HAP-1 (cell line): ENCODE measurements at regions of chr5 and their contacts with region 1.

Region 1: DNA sequence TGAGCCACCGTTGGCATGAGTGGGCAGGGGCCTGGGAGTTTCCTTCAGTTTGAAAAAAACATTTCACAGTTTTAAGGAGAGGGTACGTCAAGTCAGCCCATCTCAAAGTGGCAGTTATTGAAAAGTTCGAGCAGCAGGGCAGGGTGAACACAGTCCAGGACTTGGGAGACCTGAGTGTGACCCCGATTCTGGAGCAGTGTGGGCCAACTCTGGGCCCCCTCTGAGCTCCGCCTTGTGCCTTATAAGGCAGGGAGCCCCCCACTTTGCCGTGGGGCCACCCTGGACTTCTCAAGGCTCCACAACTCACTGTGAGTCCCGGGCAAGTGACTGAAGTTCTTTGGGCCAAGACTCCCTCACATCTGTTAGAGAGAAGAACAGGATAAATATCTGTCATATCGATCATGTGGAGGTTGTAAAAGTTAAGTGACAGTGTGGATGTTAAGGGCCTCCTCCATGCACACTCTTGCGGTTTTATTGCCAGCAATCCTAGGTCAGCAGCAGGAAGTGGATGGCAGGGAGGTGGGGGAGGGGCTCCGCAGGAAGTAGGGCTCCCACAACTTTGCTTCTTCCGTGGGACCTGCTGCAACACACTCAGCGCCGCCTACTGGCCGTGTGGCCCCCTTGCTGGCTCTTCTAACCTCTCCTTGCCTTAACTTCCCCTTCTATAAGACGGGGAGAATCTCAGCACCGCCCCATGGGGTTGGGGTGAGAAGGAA is 38.4 kb downstream of the HRH2 start:
- DNase-seq: peak; percentile 63 to 87
- H3K4me3 ChIP-seq: no peak overlapping the region
- H3K4me1 ChIP-seq: peaks cover 4% of the 10 kb centered on the region; the same call in 1 of the 2 replicates
- H3K27me3 ChIP-seq: no peaks in the 10 kb centered on the region

Region 2: GRCh38 chr5:175059687-175060211 is 636.5 kb before region 1 on chr5:
- in situ Hi-C with region 1: no loop called
- DNase-seq: peak in 1 of 2 experiments; percentile 16
- H3K4me3 ChIP-seq: no peak overlapping the region
- H3K4me1 ChIP-seq: no peaks in the 10 kb centered on the region
- H3K27me3 ChIP-seq: peaks cover 2% of the 10 kb centered on the region; the same call in 1 of the 2 replicates

Region 3: GRCh38 chr5:175534070-175534932 is 162.0 kb before region 1 on chr5:
- in situ Hi-C with region 1: loop called (anchors 5 kb)
- DNase-seq: peak; percentile 80 to 88
- H3K4me3 ChIP-seq: no peak overlapping the region
- H3K4me1 ChIP-seq: no peaks in the 10 kb centered on the region; the same call in 1 of the 2 replicates
- H3K27me3 ChIP-seq: no peaks in the 10 kb centered on the region

Region 4: GRCh38 chr5:175579742-175580432 is 116.4 kb before region 1 on chr5:
- in situ Hi-C with region 1: no loop called
- DNase-seq: no peak
- H3K4me3 ChIP-seq: no peak overlapping the region
- H3K4me1 ChIP-seq: peaks cover 9% of the 10 kb centered on the region
- H3K27me3 ChIP-seq: peaks cover 46% of the 10 kb centered on the region